ENCODE measurements at regions of chr17 and their contacts with region 1.

Region 1: GRCh38 chr17:69388822-69389442 is 25.6 kb upstream of the MAP2K6 start:
- DNase-seq: no peak
- ATAC-seq: no peak
- H3K4me3 Mint-ChIP-seq: no peak overlapping the region
- H3K27ac Mint-ChIP-seq: no peak overlapping the region
- H3K4me1 Mint-ChIP-seq: no peaks in the 10 kb centered on the region
- H3K27me3 Mint-ChIP-seq: peaks cover 10% of the 10 kb centered on the region
- CTCF ChIP-seq: no peak

Region 2: DNA sequence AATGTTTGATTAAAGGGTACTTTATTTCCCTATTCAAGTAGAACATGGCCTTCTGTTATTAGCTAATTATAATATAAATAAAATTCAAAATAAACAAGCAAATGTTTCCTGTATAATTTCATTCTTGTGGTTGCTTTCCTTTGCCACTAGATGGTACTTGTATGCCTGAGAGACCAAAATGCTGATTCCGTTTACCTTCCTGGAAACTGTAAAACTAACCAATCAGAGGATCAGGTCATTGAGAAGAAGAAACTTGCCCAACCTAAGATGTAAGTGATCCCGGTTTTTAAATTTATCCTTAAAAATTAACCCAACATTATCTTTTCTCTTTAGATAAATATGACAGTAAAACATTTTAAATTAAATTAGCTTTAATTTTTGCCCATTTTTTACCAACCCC is 53.9 kb before region 1 on chr17:
- CTCF ChIA-PET with region 1: interaction called, 15 read pairs
- POLR2A ChIA-PET with region 1: no interaction called
- intact Hi-C with region 1: no loop called
- DNase-seq: no peak
- ATAC-seq: no peak
- H3K4me3 Mint-ChIP-seq: peak overlapping the region; percentile 22
- H3K27ac Mint-ChIP-seq: no peak overlapping the region
- H3K4me1 Mint-ChIP-seq: peaks cover 3% of the 10 kb centered on the region
- H3K27me3 Mint-ChIP-seq: peaks cover 7% of the 10 kb centered on the region
- CTCF ChIP-seq: peak; percentile 46

Region 3: DNA sequence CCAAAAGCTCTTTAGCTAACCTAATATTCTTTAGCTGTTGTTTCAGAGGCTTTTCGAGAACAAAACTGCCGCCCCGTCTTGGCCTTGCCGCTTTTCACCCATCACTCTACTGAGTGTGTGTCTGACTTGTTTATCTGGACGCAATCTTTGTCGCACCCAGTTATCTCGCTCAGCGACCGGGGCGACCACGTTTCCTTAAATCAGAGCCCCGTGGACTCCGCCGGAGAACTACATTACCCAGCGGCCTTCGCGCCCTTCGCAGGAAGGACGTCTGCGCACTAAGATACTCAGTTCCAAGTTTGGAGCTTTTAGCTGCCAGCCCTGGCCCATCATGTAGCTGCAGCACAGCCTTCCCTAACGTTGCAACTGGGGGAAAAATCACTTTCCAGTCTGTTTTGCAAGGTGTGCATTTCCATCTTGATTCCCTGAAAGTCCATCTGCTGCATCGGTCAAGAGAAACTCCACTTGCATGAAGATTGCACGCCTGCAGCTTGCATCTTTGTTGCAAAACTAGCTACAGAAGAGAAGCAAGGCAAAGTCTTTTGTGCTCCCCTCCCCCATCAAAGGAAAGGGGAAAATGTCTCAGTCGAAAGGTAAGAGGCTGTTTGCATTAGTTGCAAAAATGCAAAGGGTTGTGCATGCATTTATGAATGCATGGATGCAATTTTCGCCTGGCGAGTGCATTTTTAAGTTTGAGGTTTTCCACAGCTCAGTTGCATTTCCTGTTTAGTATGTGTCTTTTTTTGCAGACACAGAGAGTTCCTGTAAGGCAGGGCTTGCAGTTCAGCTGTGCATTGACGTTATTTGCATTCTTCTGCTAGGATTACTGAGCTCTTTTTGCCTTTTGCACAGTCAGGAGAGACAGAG is 25.7 kb after region 1 on chr17 and contains the start of gene MAP2K6:
- CTCF ChIA-PET with region 1: interaction called, 22 read pairs
- POLR2A ChIA-PET with region 1: no interaction called
- intact Hi-C with region 1: no loop called
- DNase-seq: peak; percentile 94
- ATAC-seq: peak; percentile 98
- H3K4me3 Mint-ChIP-seq: no peak within 1 kb of the TSS
- H3K27ac Mint-ChIP-seq: no peak within 1 kb of the TSS
- H3K4me1 Mint-ChIP-seq: peaks cover 9% of the 10 kb centered on the region
- H3K27me3 Mint-ChIP-seq: no peaks in the 10 kb centered on the region
- CTCF ChIP-seq: no peak
- total RNA-seq, gene MAP2K6: 3.2 to 3.3 TPM

Region 4: GRCh38 chr17:69423450-69423849 is 34.5 kb after region 1 on chr17:
- CTCF ChIA-PET with region 1: interaction called, 16 read pairs
- POLR2A ChIA-PET with region 1: no interaction called
- intact Hi-C with region 1: no loop called
- DNase-seq: peak; percentile 59
- ATAC-seq: peak; percentile 86
- H3K4me3 Mint-ChIP-seq: peak overlapping the region; percentile 60
- H3K27ac Mint-ChIP-seq: peak overlapping the region; percentile 90
- H3K4me1 Mint-ChIP-seq: peaks cover 58% of the 10 kb centered on the region
- H3K27me3 Mint-ChIP-seq: no peaks in the 10 kb centered on the region
- CTCF ChIP-seq: no peak